WTC11 (cell line): ENCODE measurements at regions of chr15 and their contacts with region 1.

Region 1: GRCh38 chr15:40238532-40239403 is at the start of gene PAK6:
- DNase-seq: peak; percentile 82
- ATAC-seq: peak; percentile 92
- H3K4me3 Mint-ChIP-seq: peak within 1 kb of the TSS; percentile 60
- H3K27ac Mint-ChIP-seq: no peak within 1 kb of the TSS
- H3K4me1 Mint-ChIP-seq: peaks cover 12% of the 10 kb centered on the region
- H3K27me3 Mint-ChIP-seq: no peaks in the 10 kb centered on the region
- CTCF ChIP-seq: no peak
- total RNA-seq, gene PAK6: 8.7 to 11.7 TPM (median 9.6 TPM) in 3 replicates

Region 2: GRCh38 chr15:40252438-40253166 is 13.8 kb after region 1 on chr15:
- CTCF ChIA-PET with region 1: interaction called, 23 read pairs
- POLR2A ChIA-PET with region 1: no interaction called
- DNase-seq: peak; percentile 68
- ATAC-seq: peak; percentile 70
- H3K4me3 Mint-ChIP-seq: peak overlapping the region; percentile 73
- H3K27ac Mint-ChIP-seq: no peak overlapping the region
- H3K4me1 Mint-ChIP-seq: peaks cover 18% of the 10 kb centered on the region
- H3K27me3 Mint-ChIP-seq: peaks cover 38% of the 10 kb centered on the region
- CTCF ChIP-seq: no peak

Region 3: GRCh38 chr15:40257656-40258450 is 19.1 kb after region 1 on chr15:
- CTCF ChIA-PET with region 1: interaction called, 23 read pairs
- POLR2A ChIA-PET with region 1: interaction called, 9 read pairs
- DNase-seq: no peak
- ATAC-seq: no peak
- H3K4me3 Mint-ChIP-seq: no peak overlapping the region
- H3K27ac Mint-ChIP-seq: no peak overlapping the region
- H3K4me1 Mint-ChIP-seq: peaks cover 29% of the 10 kb centered on the region
- H3K27me3 Mint-ChIP-seq: peaks cover 15% of the 10 kb centered on the region
- CTCF ChIP-seq: no peak

Region 4: DNA sequence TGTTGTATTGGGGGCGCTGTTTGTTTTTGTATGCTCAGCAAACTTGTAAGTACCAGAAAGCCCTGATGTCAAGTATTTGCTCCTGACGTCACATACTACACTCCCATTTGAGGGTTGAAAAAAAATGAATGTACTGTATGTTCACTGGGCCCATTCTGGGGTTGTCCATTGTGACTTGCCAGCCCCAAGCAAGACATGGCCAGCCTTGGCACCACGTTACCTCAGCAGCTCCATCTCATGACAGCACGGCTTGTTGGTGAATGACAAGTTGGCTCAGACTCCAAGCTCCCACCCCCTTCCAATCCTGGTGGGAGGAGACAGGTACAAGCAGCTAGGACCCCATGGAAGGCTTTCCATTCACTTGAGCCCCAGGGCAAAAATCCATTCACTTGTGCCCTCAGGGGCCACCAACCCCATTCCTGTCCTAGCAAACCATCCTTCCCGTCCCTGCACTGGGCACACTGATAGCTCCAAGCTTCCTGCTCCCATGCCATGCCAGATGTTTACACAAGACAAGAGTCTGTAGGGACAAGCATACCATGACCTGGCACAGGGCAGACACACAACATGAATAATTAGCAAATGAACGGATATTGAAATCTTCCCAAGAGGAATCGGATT is 113.6 kb after region 1 on chr15:
- CTCF ChIA-PET with region 1: no interaction called
- POLR2A ChIA-PET with region 1: no interaction called
- DNase-seq: no peak
- ATAC-seq: no peak
- H3K4me3 Mint-ChIP-seq: no peak overlapping the region
- H3K27ac Mint-ChIP-seq: no peak overlapping the region
- H3K4me1 Mint-ChIP-seq: peaks cover 24% of the 10 kb centered on the region
- H3K27me3 Mint-ChIP-seq: peaks cover 16% of the 10 kb centered on the region
- CTCF ChIP-seq: no peak